ENCODE measurements at regions of chr1 and their contacts with region 1.

Region 1: DNA sequence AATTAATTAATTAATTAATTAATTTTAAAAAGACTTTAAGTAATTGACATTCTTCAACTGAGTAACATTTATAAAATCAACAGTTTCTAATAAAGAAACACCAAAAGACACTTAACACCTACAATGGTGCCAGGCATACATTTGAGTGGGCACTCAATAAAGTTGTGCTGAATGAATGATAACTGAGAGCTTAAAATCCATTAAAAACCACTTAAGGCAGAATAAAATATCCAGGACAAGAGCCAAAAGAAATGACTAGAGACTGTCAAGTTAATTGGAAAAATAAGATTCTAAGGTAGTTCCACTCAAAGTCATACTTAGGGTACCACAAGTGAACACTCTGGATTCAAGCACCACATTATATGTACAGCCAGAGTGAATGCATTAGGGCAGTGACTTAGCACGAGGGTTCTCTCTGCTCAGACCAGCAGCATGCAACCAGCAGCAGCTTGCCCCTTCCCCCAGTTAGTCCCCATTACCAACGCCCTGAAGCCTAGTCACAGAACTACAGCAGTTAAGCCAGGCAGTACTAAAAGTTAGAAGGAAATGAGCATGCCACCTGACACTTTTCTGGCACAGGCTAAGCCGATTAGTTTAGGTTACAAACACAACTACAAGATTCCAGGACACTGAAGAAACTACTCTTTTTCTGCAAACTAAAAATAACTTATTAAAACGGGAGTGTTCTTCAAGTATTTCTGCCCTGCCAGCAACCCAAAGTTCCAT is 46.5 kb downstream of the LUZP1 start:
- DNase-seq: peak in 1 of 2 donors; percentile 72
- ATAC-seq: peak; percentile 67
- H3K4me3 ChIP-seq: peak overlapping the region in 1 of 2 donors; percentile 26
- H3K27ac ChIP-seq: peak overlapping the region in 1 of 2 donors; percentile 28
- H3K4me1 ChIP-seq: peaks cover 2 to 4% of the 10 kb centered on the region in 2 donors
- H3K27me3 ChIP-seq: no peaks in the 10 kb centered on the region

Region 2: DNA sequence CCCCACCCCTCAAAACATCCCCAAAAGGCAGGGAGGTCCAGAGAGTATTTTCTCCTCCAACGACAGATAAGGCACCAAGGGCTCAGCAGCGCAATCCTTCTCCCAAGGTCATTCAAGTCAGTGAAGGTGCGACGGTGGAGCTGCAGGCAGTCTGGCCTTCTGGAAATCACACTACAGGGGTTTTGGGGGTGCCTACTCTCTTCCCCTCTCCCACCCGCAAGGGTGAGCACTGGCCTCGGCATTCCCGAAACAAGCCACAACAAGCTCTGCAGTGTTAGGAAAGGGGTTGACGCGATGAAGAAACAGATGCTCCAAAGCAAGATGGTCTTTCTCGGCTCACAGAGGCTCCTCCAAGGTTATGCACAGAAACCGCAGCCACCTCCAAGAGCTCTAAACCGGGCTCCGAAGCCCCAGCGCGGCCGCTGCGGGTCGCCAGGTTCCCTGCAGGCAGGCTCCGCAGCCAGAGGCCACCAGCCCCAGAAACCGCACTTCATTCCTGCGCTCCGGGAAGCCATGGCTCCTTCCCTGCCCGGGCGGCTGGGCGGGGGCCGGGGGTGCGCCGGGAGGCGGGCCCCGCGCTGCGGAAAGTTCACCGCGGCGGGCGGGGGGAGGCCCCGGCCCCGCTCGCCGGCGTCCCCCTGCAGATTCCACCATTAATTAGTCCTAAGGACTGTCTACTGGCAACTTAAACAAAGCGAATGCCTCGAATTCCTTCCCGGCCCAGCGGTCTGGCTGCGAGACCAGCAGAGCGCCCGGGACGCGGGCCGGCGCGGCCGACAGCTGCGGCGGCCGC is 45.4 kb after region 1 on chr1:
- intact Hi-C with region 1: loop called in 1 of 2 experiments (anchors 2 kb)
- DNase-seq: peak; percentile 63 to 83
- ATAC-seq: peak; percentile 54
- H3K4me3 ChIP-seq: peak overlapping the region; percentile 71 to 91
- H3K27ac ChIP-seq: peak overlapping the region; percentile 66 to 80
- H3K4me1 ChIP-seq: no peaks in the 10 kb centered on the region
- H3K27me3 ChIP-seq: no peaks in the 10 kb centered on the region